ENCODE measurements at regions of chr4 and their contacts with region 1.

Region 1: DNA sequence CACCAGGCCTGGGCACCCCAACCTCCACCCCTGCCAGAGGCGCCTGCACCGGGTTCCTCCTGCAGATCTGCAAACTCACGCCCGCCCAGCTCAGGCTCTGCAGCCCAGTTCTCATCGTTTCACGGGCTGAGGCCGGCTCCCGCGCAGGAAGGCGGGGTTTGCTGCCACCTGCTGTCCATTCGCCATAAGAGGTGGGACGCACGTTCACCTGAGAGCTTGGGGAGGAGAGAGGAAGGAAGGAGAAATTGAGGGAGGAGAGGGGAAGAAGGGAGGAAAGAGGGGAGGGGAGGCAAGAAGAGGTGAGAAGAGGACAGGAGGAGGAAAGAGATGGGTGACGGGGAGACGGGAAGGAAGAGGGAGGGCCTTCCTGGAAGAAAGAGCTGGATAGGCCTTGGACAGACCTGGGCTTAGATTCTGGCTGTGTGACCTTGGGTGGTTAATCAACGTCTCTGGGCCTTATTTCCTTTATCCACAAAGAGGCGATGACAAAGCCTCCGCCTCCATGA is 114.5 kb downstream of the ADRA2C start:
- DNase-seq: peak; percentile 55
- H3K4me3 ChIP-seq: no peak overlapping the region
- H3K27ac ChIP-seq: no peak overlapping the region
- H3K4me1 ChIP-seq: no peaks in the 10 kb centered on the region
- H3K27me3 ChIP-seq: peaks cover 12 to 19% of the 10 kb centered on the region in 2 experiments
- CTCF ChIP-seq: peak; percentile 55 to 75
- POLR2A ChIP-seq: no peak

Region 2: DNA sequence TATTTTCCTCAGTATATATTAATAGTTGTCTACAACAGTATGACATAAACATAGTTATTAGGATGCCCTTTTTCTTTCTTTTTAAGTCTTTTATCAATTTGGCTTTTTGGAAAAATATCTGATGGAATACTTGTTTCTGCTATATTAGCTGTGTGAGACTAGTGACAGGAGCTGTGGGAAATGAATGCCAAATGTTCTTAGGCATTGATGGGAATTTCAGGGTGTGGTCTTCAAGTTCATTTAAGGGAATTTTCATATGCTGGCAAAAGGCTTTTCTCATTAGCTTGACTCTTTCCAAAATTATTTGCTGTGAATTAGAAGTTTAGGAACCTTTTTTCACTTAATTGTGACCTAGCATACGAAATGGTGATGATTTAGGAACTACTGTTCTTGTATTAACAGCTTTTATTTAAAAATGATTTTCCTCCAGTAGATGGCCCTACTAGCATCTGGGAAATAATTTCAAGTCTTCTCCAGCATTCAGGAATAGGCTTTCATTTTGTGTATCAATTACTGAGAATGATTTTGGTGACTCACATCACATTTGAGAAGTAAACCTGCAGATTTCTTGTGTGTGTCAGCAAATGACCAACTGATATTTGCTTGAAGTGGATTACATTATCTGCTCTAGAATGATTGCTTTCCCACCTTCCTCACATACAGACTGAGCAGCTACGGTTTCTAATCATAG is 735.3 kb before region 1 on chr4:
- CTCF ChIA-PET with region 1: interaction called, 10 read pairs
- POLR2A ChIA-PET with region 1: no interaction called
- dilution Hi-C with region 1: no loop called
- intact Hi-C with region 1: no loop called
- DNase-seq: peak; percentile 25
- H3K4me3 ChIP-seq: no peak overlapping the region
- H3K27ac ChIP-seq: no peak overlapping the region
- H3K4me1 ChIP-seq: no peaks in the 10 kb centered on the region
- H3K27me3 ChIP-seq: no peaks in the 10 kb centered on the region
- CTCF ChIP-seq: no peak
- POLR2A ChIP-seq: no peak

Region 3: DNA sequence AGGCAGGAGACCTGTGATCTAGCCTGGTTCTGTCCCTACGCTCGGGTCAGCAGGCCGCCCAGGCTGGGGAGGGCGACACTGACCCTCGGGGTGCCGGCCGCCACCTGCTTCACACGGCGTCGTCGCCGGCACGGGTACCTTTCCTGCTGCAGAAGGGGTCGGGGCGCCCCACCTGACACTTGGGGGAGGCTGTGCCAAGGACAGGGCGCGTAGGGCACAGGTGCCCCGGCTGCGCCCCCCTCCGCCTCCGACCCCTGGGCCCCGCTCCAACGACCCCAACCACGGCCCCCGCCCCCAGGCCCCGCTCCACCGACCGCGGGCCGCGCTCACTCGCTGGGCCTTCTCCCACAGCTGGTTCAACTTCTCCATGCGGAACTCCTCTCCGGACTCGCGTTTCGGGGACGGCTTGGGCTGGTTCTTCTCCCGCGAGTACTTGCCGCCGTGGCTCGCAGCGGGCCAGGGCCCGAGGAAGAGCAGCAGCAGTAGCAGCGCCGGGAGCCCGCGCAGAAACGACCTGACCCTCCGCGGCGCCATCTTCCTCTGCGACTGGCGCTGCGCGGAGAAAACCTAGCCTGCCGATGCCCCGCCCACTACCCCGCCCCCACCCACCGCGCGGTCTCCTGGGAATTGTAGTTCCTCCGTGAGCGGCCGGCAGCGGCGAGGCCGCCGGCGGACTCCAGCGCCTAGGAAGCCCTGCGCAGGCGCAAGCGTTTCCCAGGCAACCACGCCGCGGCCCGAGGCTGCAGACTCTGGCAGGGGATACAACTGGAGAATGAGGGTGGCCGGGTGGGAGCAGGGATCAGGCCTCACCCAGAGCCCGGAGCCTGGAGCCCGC is 348.6 kb before region 1 on chr4 and contains the start of gene LRPAP1:
- CTCF ChIA-PET with region 1: no interaction called
- POLR2A ChIA-PET with region 1: no interaction called
- dilution Hi-C with region 1: no loop called
- intact Hi-C with region 1: loop called (anchors 1 kb)
- DNase-seq: peak; percentile 92
- H3K4me3 ChIP-seq: peak within 1 kb of the TSS; percentile 57 to 79 (median 73)
- H3K27ac ChIP-seq: peak within 1 kb of the TSS; percentile 45
- H3K4me1 ChIP-seq: peaks cover 11% of the 10 kb centered on the region
- H3K27me3 ChIP-seq: peaks cover 0 to 4% of the 10 kb centered on the region in 2 experiments
- CTCF ChIP-seq: no peak
- POLR2A ChIP-seq: peak; percentile 90
- total RNA-seq, gene LRPAP1: 152 and 170 TPM in 2 replicates

Region 4: GRCh38 chr4:3765271-3766040 is 115.2 kb before region 1 on chr4:
- CTCF ChIA-PET with region 1: interaction called, 23 read pairs
- POLR2A ChIA-PET with region 1: no interaction called
- dilution Hi-C with region 1: no loop called
- intact Hi-C with region 1: loop called (anchors 5 kb)
- DNase-seq: no peak
- H3K4me3 ChIP-seq: peak overlapping the region in 1 of 3 experiments; percentile 6
- H3K27ac ChIP-seq: no peak overlapping the region
- H3K4me1 ChIP-seq: no peaks in the 10 kb centered on the region
- H3K27me3 ChIP-seq: peaks cover 16 to 20% of the 10 kb centered on the region in 2 experiments
- CTCF ChIP-seq: peak; percentile 17 to 23
- POLR2A ChIP-seq: no peak

Region 5: DNA sequence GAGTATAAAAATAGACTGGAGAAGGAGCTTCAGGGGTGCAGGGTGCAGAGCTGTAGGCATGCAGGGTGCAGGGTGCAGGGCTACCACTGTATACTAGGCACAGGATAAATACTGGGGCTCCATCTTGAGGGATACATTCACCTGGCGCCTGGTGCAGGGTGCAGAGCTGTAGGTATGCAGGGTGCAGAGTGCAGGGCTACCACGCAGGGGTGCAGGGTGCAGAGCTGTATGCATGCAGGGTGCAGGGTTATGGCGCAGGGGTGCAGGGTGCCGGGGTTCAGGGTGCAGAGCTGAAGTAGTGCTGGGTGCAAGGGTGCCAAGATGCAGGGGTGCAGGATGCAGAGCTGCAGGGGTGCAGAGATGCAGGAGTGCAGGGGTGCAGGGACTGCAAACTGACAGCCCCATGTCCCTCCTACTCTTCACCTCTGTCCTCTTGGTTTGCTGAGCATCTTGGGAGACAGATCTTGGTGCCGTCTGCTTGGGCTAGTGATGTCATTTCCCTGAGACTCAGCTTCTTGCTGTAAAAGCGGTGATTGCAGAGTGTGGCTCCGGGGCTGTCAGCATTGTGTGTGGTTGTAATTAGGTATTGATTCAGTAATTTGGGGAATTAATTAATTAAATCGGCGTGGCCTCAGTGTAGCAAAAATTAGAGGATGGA is 23.3 kb before region 1 on chr4:
- CTCF ChIA-PET with region 1: interaction called, 12 read pairs
- POLR2A ChIA-PET with region 1: no interaction called
- dilution Hi-C with region 1: no loop called
- intact Hi-C with region 1: loop called (anchors 1 kb)
- DNase-seq: no peak
- H3K4me3 ChIP-seq: no peak overlapping the region
- H3K27ac ChIP-seq: no peak overlapping the region
- H3K4me1 ChIP-seq: peaks cover 4% of the 10 kb centered on the region
- H3K27me3 ChIP-seq: no peaks in the 10 kb centered on the region
- CTCF ChIP-seq: no peak
- POLR2A ChIP-seq: no peak

Measured in endothelial cell of umbilical vein (primary cell).